ENCODE measurements at regions of chr16 and their contacts with region 1.

Region 1: GRCh38 chr16:1331712-1332617 is 1.5 kb upstream of the BAIAP3 start:
- DNase-seq: peak; percentile 82 to 92
- H3K4me3 ChIP-seq: peak overlapping the region; percentile 49; the same call in 1 of the 2 replicates
- H3K27ac ChIP-seq: no peak overlapping the region
- H3K4me1 ChIP-seq: peaks cover 15% of the 10 kb centered on the region
- H3K27me3 ChIP-seq: no peaks in the 10 kb centered on the region
- CTCF ChIP-seq: no peak

Region 2: DNA sequence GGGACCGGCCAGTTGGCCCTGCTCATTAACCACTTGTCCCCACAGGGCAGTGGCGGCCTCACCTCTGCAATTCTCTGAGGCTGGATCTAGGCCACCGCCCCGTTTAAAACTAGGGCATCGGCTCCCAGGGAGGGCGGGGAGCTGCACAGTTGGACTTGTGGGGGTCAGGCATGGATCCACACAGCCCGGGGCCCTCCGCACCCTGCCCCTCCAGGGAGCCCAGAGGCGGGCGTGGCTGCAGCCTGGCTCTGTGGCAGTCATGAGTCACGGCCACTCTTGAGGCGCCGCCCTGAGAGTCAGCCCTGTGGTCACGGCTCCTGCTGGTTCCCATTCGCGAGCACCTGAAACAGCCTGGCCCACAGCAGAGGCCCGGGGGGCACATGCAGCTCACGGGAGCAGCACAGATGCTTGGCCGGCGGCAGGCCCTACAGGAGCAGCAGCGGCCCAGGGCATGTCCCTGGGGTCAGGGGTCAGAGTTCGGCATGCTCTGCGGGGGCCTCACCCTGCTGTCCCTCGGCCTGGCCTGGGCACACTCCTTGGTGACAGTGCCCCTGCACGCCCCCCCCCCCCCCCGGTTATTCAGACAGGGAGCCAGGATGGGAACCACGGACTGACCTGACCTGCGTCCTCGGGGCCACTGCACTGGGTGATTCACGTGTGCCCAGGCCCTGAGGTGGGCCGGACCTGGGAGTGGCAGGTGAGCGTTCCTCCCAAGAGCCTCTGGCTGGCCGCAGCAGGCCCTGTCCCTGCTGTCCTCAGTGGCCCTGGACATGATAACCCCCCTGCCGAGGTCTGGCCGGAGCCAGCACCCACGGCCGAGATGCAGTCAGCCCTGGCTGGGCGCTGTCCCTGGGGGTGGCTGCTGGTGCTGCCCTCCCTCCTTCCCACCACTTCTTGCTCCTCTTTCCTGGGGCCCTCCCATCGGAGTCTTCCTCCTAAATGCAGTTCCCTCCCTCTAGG is 796.2 kb before region 1 on chr16:
- CTCF ChIA-PET with region 1: no interaction called
- POLR2A ChIA-PET with region 1: no interaction called
- intact Hi-C with region 1: no loop called
- DNase-seq: peak; percentile 92 to 99
- H3K4me3 ChIP-seq: no peak overlapping the region
- H3K27ac ChIP-seq: peak overlapping the region; percentile 66
- H3K4me1 ChIP-seq: peaks cover 33% of the 10 kb centered on the region
- H3K27me3 ChIP-seq: no peaks in the 10 kb centered on the region
- CTCF ChIP-seq: no peak; the same call in 1 of the 2 replicates

Region 3: GRCh38 chr16:1300664-1301476 is 31.1 kb before region 1 on chr16:
- CTCF ChIA-PET with region 1: interaction called, 10 read pairs
- POLR2A ChIA-PET with region 1: interaction called, 3 read pairs
- intact Hi-C with region 1: no loop called
- DNase-seq: peak in 1 of 2 experiments; percentile 75
- H3K4me3 ChIP-seq: no peak overlapping the region
- H3K27ac ChIP-seq: no peak overlapping the region
- H3K4me1 ChIP-seq: peaks cover 56% of the 10 kb centered on the region
- H3K27me3 ChIP-seq: no peaks in the 10 kb centered on the region
- CTCF ChIP-seq: peak; percentile 71

Region 4: DNA sequence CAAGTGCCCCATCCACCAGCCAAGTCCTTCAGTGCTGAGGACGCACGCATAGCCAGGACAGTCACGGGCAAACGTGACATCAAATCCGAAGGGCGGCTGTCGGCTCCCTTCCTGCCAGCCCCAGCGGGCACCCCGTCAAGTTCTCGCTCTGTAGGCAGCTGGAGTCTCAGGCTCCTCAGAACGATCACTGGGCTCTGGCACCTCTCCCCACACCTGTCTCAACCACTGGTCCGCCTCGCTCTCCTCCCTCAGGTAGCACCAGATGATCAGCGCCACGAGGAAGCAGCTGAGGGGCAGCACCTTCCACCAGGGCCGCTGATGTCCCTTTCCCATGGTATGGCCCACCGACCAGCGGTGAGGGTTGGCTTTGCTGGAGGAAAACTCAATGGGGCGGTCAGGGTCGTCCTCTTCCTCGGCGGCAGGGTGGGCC is 88.2 kb after region 1 on chr16:
- CTCF ChIA-PET with region 1: interaction called, 3 read pairs
- POLR2A ChIA-PET with region 1: interaction called, 14 read pairs
- intact Hi-C with region 1: no loop called
- DNase-seq: no peak
- H3K4me3 ChIP-seq: peak overlapping the region; percentile 91
- H3K27ac ChIP-seq: peak overlapping the region; percentile 24; the same call in 1 of the 2 replicates
- H3K4me1 ChIP-seq: peaks cover 47% of the 10 kb centered on the region
- H3K27me3 ChIP-seq: no peaks in the 10 kb centered on the region
- CTCF ChIP-seq: no peak

Region 5: GRCh38 chr16:1723450-1724147 is 391.6 kb after region 1 on chr16:
- CTCF ChIA-PET with region 1: interaction called, 10 read pairs
- POLR2A ChIA-PET with region 1: no interaction called
- intact Hi-C with region 1: no loop called
- DNase-seq: peak in 1 of 2 experiments; percentile 68
- H3K4me3 ChIP-seq: no peak overlapping the region
- H3K27ac ChIP-seq: peak overlapping the region; percentile 67; the same call in 1 of the 2 replicates
- H3K4me1 ChIP-seq: peaks cover 42% of the 10 kb centered on the region
- H3K27me3 ChIP-seq: no peaks in the 10 kb centered on the region
- CTCF ChIP-seq: peak; percentile 90